GM13976 (cell line): ENCODE measurements at regions of chr1 and their contacts with region 1.

Region 1: DNA sequence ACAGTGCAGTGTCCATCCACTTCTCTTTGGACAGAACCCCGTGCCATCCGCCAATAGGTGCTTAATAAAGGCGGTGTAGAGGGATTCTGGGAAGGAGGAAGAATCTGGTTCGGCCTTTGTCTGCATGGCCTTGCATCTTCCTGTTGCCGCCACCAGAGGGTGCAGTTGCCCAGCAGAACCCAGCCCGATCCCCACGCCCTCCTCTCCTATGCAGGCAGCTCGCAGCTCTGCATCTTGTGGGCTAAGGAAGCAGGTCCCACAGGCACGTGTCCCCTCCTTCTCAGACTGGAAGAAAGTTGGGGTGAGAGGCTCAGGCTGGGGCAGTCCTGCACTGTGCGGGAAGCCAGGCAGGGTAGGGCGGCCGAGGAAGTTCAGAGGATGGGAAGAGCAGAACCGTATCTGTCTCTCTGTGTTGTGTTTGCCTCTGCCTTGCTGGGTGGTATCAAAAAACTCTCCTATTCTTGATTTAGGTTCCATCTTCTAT is 20.8 kb downstream of the NAV1 start:
- DNase-seq: peak; percentile 87
- CTCF ChIP-seq: peak; percentile 82

Region 2: GRCh38 chr1:201696217-201696761 is 136.6 kb after region 1 on chr1:
- in situ Hi-C with region 1: loop called (anchors 10 kb)
- DNase-seq: no peak
- CTCF ChIP-seq: no peak

Region 3: DNA sequence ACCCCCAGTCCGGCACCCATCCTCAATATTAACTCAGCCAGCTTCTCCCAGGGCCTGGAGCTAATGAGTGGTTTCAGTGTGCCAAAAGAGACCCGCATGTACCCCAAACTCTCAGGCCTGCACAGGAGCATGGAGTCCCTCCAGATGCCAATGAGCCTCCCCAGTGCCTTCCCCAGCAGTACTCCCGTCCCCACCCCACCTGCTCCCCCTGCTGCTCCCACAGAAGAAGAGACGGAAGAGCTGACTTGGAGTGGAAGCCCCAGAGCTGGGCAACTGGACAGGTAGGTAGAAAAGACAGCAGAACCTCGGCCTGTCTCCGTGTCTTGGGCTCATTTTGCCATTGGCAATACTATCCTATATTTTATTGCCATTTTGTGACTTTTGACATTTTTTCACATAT is 223.9 kb after region 1 on chr1:
- in situ Hi-C with region 1: loop called (anchors 10 kb)
- DNase-seq: no peak
- CTCF ChIP-seq: no peak